CD4-positive, alpha-beta T cell (primary cell): ENCODE measurements at regions of chr6 and their contacts with region 1.

Region 1: GRCh38 chr6:129309154-129309553 is 400.8 kb downstream of the ARHGAP18 start:
- DNase-seq: no peak
- ATAC-seq: no peak
- H3K4me3 ChIP-seq: no peak overlapping the region
- H3K4me3 Mint-ChIP-seq: no peak overlapping the region
- H3K27ac ChIP-seq: no peak overlapping the region
- H3K27ac Mint-ChIP-seq: no peak overlapping the region
- H3K4me1 ChIP-seq: no peaks in the 10 kb centered on the region
- H3K4me1 Mint-ChIP-seq: no peaks in the 10 kb centered on the region
- H3K27me3 ChIP-seq: no peaks in the 10 kb centered on the region
- H3K27me3 Mint-ChIP-seq: peaks cover 31% of the 10 kb centered on the region
- CTCF ChIP-seq: no peak

Region 2: GRCh38 chr6:129297592-129297991 is 11.6 kb before region 1 on chr6:
- CTCF ChIA-PET with region 1: no interaction called
- POLR2A ChIA-PET with region 1: no interaction called
- intact Hi-C with region 1: loop called in 1 of 2 experiments (anchors 1 kb)
- DNase-seq: no peak
- ATAC-seq: no peak
- H3K4me3 ChIP-seq: no peak overlapping the region
- H3K4me3 Mint-ChIP-seq: no peak overlapping the region
- H3K27ac ChIP-seq: no peak overlapping the region
- H3K27ac Mint-ChIP-seq: no peak overlapping the region
- H3K4me1 ChIP-seq: no peaks in the 10 kb centered on the region
- H3K4me1 Mint-ChIP-seq: no peaks in the 10 kb centered on the region
- H3K27me3 ChIP-seq: no peaks in the 10 kb centered on the region
- H3K27me3 Mint-ChIP-seq: no peaks in the 10 kb centered on the region
- CTCF ChIP-seq: no peak